Dendritic cell treated with granulocyte-macrophage colony-stimulating factor and Interleukin-4, amounts not matched to agents 40 ng/mL and 50 ng/mL, for 4 days (primary cell): ENCODE measurements at regions of chr17 and their contacts with region 1.

Region 1: GRCh38 chr17:74212913-74213791 is at the start of gene TTYH2:
- H3K4me3 Mint-ChIP-seq: peak within 1 kb of the TSS; percentile 99
- H3K27ac Mint-ChIP-seq: peak within 1 kb of the TSS; percentile 93
- H3K4me1 Mint-ChIP-seq: peaks cover 90% of the 10 kb centered on the region
- H3K27me3 Mint-ChIP-seq: no peaks in the 10 kb centered on the region

Region 2: DNA sequence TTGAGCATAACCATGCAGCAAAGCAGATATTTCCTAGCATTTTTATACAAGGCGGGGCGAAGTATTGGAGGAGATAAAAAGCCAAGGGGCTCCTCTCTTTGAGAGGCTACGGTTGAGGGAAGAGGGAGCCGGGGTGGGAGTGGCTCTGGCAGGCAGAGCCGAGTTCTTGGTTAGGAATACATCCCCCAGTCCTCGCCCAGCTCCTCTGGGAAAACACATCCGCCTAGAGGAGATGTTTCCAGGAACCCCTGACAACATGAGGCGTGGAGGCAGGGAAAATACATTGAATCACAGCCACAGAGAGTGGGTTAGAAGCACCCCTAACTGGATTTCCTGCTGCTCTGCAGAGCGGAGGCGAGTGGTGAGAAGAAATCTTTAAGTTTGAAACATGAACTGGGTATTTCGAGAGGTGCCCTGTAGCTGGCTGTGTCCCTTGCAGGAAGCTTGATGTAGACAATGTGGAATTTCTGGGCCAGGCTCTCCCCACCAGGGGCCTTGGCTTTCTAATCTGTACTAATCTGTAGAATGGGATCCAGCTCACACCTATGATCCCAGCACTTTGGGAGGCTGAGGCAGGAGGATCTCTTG is 27.6 kb after region 1 on chr17:
- intact Hi-C with region 1: loop called (anchors 2 kb)
- H3K4me3 Mint-ChIP-seq: no peak overlapping the region
- H3K27ac Mint-ChIP-seq: peak overlapping the region; percentile 84
- H3K4me1 Mint-ChIP-seq: peaks cover 55% of the 10 kb centered on the region
- H3K27me3 Mint-ChIP-seq: no peaks in the 10 kb centered on the region

Region 3: GRCh38 chr17:74268558-74268957 is 55.4 kb after region 1 on chr17:
- intact Hi-C with region 1: no loop called
- H3K4me3 Mint-ChIP-seq: no peak overlapping the region
- H3K27ac Mint-ChIP-seq: no peak overlapping the region
- H3K4me1 Mint-ChIP-seq: peaks cover 35% of the 10 kb centered on the region
- H3K27me3 Mint-ChIP-seq: peaks cover 59% of the 10 kb centered on the region

Region 4: GRCh38 chr17:74280093-74280513 is 67.0 kb after region 1 on chr17:
- intact Hi-C with region 1: loop called (anchors 5 kb)
- H3K4me3 Mint-ChIP-seq: no peak overlapping the region
- H3K27ac Mint-ChIP-seq: peak overlapping the region; percentile 67
- H3K4me1 Mint-ChIP-seq: peaks cover 61% of the 10 kb centered on the region
- H3K27me3 Mint-ChIP-seq: peaks cover 24% of the 10 kb centered on the region

Region 5: GRCh38 chr17:74296548-74296936 is 83.4 kb after region 1 on chr17:
- intact Hi-C with region 1: loop called (anchors 1 kb)
- H3K4me3 Mint-ChIP-seq: no peak overlapping the region
- H3K27ac Mint-ChIP-seq: no peak overlapping the region
- H3K4me1 Mint-ChIP-seq: peaks cover 20% of the 10 kb centered on the region
- H3K27me3 Mint-ChIP-seq: peaks cover 15% of the 10 kb centered on the region

Region 6: DNA sequence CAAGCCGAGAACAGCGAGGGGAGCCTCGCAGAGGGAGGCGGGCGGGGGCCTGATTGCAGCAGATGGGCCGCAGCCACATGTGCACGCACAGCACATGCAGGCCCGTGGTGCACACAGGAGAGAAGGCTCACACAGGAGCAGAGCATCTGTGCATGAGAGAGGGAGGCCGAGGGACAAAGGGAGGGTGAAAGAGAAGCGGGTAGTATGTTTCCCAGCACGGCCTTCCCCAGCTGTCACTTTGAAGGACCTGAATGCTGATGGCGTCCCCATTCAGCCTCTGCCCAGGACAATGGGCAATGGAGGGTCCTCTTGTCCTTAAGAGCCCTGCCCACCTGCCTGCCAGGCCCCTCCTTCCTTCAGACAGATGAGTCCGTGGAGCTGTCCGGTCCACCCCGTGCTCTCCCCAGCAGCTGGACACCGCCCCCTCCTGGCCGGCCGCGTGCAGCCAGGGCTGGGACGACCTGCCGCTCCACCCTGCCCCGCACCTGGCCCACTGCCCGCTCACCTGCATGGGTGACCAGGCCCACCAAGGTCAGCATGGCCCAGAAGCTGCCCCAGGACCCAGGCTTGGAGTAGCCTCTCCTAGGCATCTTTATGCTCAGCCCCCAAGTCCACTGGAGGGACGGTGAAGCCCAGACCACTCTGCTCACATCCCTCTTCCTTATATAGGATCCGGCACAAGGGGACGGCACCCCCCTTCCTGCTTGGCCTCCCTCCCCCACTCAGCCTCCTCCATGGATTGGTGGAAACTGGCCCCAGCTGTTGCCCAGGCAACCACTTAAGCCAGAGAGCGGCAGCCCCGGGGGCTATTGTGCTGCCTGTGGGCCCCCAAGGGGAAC is 148.3 kb after region 1 on chr17 and contains the start of gene BTBD17:
- intact Hi-C with region 1: loop called (anchors 5 kb)
- H3K4me3 Mint-ChIP-seq: no peak within 1 kb of the TSS
- H3K27ac Mint-ChIP-seq: no peak within 1 kb of the TSS
- H3K4me1 Mint-ChIP-seq: peaks cover 5% of the 10 kb centered on the region
- H3K27me3 Mint-ChIP-seq: peaks cover 78% of the 10 kb centered on the region